Activated CD8-positive, alpha-beta T cell treated with anti-CD3 and anti-CD28 coated beads, Interleukin-2, amount 10 ng/mL, durations not matched to agents 7 days and 5 days (primary cell): ENCODE measurements at regions of chr3 and their contacts with region 1.

Region 1: GRCh38 chr3:73070675-73071575 is 9.5 kb downstream of the EBLN2 start:
- DNase-seq: no peak
- ATAC-seq: no peak
- H3K4me3 Mint-ChIP-seq: no peak overlapping the region
- H3K27ac Mint-ChIP-seq: no peak overlapping the region
- H3K4me1 Mint-ChIP-seq: peaks cover 39% of the 10 kb centered on the region
- H3K27me3 Mint-ChIP-seq: no peaks in the 10 kb centered on the region

Region 2: GRCh38 chr3:73086071-73086494 is 15.2 kb after region 1 on chr3:
- CTCF ChIA-PET with region 1: interaction called, 10 read pairs
- POLR2A ChIA-PET with region 1: no interaction called
- DNase-seq: peak; percentile 60
- ATAC-seq: peak; percentile 69
- H3K4me3 Mint-ChIP-seq: no peak overlapping the region
- H3K27ac Mint-ChIP-seq: no peak overlapping the region
- H3K4me1 Mint-ChIP-seq: peaks cover 8% of the 10 kb centered on the region
- H3K27me3 Mint-ChIP-seq: peaks cover 5% of the 10 kb centered on the region